ENCODE measurements at regions of chr13 and their contacts with region 1.

Region 1: GRCh38 chr13:48975856-48976575 is at the start of gene FNDC3A:
- DNase-seq: peak; percentile 78
- H3K4me3 ChIP-seq: peak within 1 kb of the TSS; percentile 64 to 91
- H3K27ac ChIP-seq: peak within 1 kb of the TSS; percentile 98 to 99
- H3K4me1 ChIP-seq: no peaks in the 10 kb centered on the region
- H3K27me3 ChIP-seq: no peaks in the 10 kb centered on the region
- CTCF ChIP-seq: peak in 3 of 4 experiments; percentile 1 to 10 (median 10)
- POLR2A ChIP-seq: peak; percentile 39
- total RNA-seq, gene FNDC3A: 38.9 to 58.2 TPM

Region 2: GRCh38 chr13:49098771-49099512 is 122.9 kb after region 1 on chr13:
- intact Hi-C with region 1: loop called (anchors 5 kb)
- DNase-seq: no peak
- H3K4me3 ChIP-seq: no peak overlapping the region
- H3K27ac ChIP-seq: peak overlapping the region in 1 of 2 donors; percentile 29
- H3K4me1 ChIP-seq: no peaks in the 10 kb centered on the region
- H3K27me3 ChIP-seq: no peaks in the 10 kb centered on the region
- CTCF ChIP-seq: peak in 1 of 4 experiments; percentile 29
- POLR2A ChIP-seq: no peak

Region 3: DNA sequence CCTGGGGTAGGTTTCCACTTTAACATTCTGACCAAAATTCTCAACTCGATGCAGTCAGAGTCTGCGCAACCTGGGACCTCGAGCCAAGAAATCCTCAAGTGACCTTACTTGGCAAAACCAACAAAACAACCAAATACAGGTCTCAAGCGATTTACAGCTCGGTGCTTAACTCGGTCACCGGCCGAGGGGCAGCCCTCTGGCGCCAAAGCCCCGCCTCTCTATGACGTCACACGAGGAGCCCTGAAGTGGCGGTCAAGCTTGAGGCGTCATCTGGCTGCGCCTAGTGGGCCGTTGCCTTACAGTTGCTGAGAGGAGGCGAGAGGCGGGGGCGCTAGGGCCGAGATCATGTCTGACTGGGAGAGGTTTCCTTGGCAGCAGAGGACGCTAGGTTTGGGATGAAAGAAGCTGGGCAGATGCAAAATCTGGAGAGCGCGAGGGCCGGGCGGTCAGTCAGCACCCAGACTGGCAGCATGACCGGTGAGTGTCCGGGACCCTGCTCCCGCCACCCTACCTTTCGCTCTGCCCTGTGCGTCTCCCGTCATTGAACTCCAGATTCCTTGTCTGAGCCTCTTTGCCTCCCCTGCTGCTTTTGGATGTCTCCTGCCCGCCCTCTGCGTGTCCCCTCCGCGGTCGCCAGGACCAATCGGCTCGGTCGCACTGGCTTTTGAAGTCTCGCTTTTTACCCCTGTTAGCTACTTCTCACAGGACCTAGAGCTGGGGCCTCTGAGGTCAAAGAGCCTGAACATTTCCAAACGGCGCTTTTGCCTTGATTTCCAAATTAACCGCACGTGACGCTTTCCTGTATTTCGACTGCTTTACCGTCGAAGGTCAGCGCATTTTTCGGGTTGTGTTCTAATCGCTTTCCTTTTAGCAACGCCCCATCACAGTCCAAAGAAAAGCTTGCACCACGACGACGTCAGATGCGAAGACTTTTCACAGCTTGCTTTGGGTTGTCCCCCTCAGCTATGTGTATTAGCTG is 271.9 kb after region 1 on chr13 and contains the start of gene CDADC1:
- intact Hi-C with region 1: loop called (anchors 5 kb)
- DNase-seq: peak; percentile 96
- H3K4me3 ChIP-seq: peak within 1 kb of the TSS; percentile 64 to 67
- H3K27ac ChIP-seq: peak within 1 kb of the TSS; percentile 82 to 85
- H3K4me1 ChIP-seq: no peaks in the 10 kb centered on the region
- H3K27me3 ChIP-seq: no peaks in the 10 kb centered on the region
- CTCF ChIP-seq: peak in 1 of 4 experiments; percentile 28
- POLR2A ChIP-seq: peak; percentile 78
- total RNA-seq, gene CDADC1: 2.0 to 6.1 TPM